ENCODE measurements at regions of chr2 and their contacts with region 1.

Region 1: GRCh38 chr2:219689676-219690628 is 62.5 kb downstream of the SLC4A3 start:
- DNase-seq: peak in 4 of 5 donors; percentile 42 to 74 (median 49)
- H3K4me3 ChIP-seq: no peak overlapping the region
- H3K27ac ChIP-seq: no peak overlapping the region
- H3K4me1 ChIP-seq: peaks cover 5% of the 10 kb centered on the region
- H3K27me3 ChIP-seq: no peaks in the 10 kb centered on the region
- CTCF ChIP-seq: peak; percentile 73 to 86 (median 78)
- EP300 ChIP-seq: no peak
- POLR2A ChIP-seq: no peak

Region 2: DNA sequence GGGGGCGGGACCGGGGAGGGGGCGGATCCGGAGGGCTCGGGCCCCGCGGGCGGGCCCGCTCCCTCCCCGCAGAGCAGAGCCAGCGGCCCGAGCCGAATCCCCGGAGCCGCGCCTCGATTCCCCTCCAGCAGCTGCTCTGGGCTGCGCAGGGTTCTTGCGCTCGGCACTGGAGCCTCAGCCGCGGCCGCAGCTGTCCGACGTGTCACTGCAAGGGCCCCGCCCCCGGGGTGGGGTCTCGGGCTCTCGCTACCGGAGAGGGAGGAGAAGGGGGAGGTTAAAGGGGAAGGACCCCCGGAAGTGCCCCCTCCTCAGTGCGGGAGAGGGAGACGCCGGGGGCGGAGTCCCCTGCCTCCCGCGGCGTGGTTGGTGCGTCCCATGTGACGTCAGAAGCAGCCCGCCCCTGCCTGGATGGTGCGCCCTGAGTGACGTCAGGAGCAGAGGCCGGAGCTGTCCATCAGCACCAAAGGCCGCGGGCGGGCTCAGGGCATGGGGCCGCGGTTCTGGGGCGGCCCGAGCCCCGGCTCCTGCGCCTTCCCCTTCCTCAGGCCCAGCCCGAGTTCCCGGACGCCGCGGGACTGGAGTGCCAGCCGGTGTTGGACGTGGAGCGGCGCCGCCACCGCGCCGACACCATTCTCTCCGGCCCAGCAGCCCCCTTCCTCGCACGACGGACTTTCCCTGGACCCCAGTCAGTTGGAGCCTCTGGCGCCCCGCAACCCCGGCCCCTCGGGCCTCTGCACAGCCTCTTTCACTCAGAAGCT is 146.2 kb before region 1 on chr2 and contains the starts of genes CHPF and TMEM198:
- intact Hi-C with region 1: loop called in 1 of 4 experiments (anchors 5 kb)
- DNase-seq: peak; percentile 99
- H3K4me3 ChIP-seq: peak within 1 kb of the TSS; percentile 82
- H3K27ac ChIP-seq: peak within 1 kb of the TSS; percentile 88 to 95
- H3K4me1 ChIP-seq: peaks cover 9% of the 10 kb centered on the region
- H3K27me3 ChIP-seq: no peaks in the 10 kb centered on the region
- CTCF ChIP-seq: no peak
- EP300 ChIP-seq: peak; percentile 77
- POLR2A ChIP-seq: peak; percentile 74
- total RNA-seq, gene CHPF: 89.4 to 181 (median 135) TPM
- total RNA-seq, gene TMEM198: 5.8 to 22.7 (median 10.7) TPM

Region 3: GRCh38 chr2:219650426-219651248 is 39.3 kb before region 1 on chr2:
- intact Hi-C with region 1: loop called in 2 of 4 experiments (anchors 2 to 10 kb)
- DNase-seq: no peak
- H3K4me3 ChIP-seq: no peak overlapping the region
- H3K27ac ChIP-seq: no peak overlapping the region
- H3K4me1 ChIP-seq: peaks cover 6% of the 10 kb centered on the region
- H3K27me3 ChIP-seq: no peaks in the 10 kb centered on the region
- CTCF ChIP-seq: no peak
- EP300 ChIP-seq: no peak
- POLR2A ChIP-seq: no peak

Region 4: DNA sequence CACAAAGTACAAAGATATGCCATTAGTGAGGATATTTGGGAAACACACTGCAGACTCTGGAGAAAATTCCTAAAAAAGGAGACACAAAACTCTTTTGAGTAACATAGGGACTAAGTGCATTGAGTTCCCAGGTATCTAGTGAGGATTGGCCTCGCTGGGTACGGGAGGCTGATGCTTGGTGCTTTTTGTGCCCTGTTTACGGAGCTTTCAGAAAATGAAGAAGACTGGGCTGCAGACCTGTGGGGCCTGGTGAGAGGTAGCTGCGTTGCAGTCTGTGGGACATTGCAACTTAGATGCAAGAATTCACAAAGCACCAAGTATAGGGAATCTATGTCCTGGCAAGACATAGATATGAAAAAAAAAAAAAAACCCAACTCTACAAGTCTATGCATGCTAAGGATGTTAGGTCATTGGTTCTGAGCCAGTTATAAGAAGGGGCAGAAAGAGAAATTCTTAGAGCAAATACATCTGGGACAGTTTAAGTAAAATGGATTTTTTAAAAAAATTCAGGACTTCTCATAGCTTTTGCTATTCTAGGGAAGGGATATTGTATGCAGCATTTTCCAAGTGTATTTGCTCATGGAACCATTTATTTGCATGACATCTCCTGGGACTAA is 93.5 kb after region 1 on chr2:
- intact Hi-C with region 1: no loop called
- DNase-seq: no peak
- H3K4me3 ChIP-seq: no peak overlapping the region
- H3K27ac ChIP-seq: no peak overlapping the region
- H3K4me1 ChIP-seq: peaks cover 2% of the 10 kb centered on the region
- H3K27me3 ChIP-seq: no peaks in the 10 kb centered on the region
- CTCF ChIP-seq: no peak
- EP300 ChIP-seq: no peak
- POLR2A ChIP-seq: no peak

Measured in ovary (tissue), 10 donors.